ENCODE measurements at regions of chr5 and their contacts with region 1.

Region 1: GRCh38 chr5:5560016-5560415 is 137.5 kb downstream of the ICE1 start:
- DNase-seq: no peak
- ATAC-seq: no peak
- H3K4me3 ChIP-seq: no peak overlapping the region
- H3K27ac ChIP-seq: no peak overlapping the region
- H3K4me1 ChIP-seq: no peaks in the 10 kb centered on the region
- H3K27me3 ChIP-seq: peaks cover 73% of the 10 kb centered on the region
- CTCF ChIP-seq: no peak

Region 2: DNA sequence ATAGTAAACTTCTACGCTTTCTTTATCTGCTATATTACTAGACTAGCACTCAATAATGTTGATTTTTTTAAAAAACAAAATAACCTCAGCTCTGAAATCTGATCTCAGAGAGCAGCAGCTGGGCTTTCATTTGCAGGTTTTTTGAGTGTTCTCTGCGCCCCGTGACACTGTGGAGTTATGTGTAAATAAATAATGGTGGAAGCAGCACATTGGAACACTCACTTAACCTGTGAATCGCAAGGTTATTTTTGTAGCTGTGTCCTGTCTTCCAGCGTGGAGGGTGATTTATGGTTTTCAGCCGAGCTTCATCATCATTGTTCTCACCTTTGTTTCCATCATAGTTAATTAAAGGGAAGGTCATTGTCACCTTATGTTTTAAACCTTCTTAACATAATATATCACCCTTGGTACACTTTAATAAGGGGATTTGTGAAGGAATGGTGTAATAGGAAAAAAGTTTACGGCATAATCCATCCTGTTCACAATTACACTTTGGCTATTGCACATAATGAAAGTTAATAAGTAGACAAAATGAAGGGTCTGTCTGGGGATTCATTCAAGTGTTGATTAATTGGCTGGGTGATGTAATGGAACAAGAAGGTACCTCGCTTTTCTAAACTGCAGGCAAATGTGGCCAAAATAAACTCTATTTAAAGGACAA is 913.2 kb before region 1 on chr5:
- CTCF ChIA-PET with region 1: no interaction called
- POLR2A ChIA-PET with region 1: no interaction called
- intact Hi-C with region 1: no loop called
- DNase-seq: no peak
- ATAC-seq: no peak
- H3K4me3 ChIP-seq: no peak overlapping the region
- H3K27ac ChIP-seq: no peak overlapping the region
- H3K4me1 ChIP-seq: no peaks in the 10 kb centered on the region
- H3K27me3 ChIP-seq: no peaks in the 10 kb centered on the region
- CTCF ChIP-seq: no peak

Region 3: DNA sequence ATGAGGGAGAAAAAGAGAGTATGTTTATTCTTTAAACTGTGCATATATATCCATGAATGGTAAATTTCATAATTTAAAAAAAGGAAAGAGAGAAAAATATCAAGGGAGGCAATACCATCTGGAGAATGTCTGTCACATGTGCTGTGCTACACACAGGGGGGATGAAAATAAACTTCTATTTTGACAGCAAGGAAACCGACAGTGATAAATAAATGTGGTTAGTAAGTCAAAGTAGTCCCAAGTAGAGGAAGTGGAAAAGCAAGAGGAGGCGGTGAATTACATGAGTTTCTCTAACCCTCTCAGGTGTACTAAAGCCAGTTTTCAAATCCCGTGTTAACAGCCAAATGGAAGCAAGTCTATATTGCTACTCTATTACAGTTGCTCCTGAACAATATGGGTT is 54.2 kb before region 1 on chr5:
- CTCF ChIA-PET with region 1: no interaction called
- POLR2A ChIA-PET with region 1: no interaction called
- intact Hi-C with region 1: no loop called
- DNase-seq: no peak
- ATAC-seq: no peak
- H3K4me3 ChIP-seq: no peak overlapping the region
- H3K27ac ChIP-seq: no peak overlapping the region
- H3K4me1 ChIP-seq: no peaks in the 10 kb centered on the region
- H3K27me3 ChIP-seq: peaks cover 67% of the 10 kb centered on the region
- CTCF ChIP-seq: no peak

Region 4: GRCh38 chr5:5533927-5534326 is 26.1 kb before region 1 on chr5:
- CTCF ChIA-PET with region 1: no interaction called
- POLR2A ChIA-PET with region 1: interaction called, 26 read pairs
- intact Hi-C with region 1: no loop called
- DNase-seq: no peak
- ATAC-seq: no peak
- H3K4me3 ChIP-seq: no peak overlapping the region
- H3K27ac ChIP-seq: no peak overlapping the region
- H3K4me1 ChIP-seq: no peaks in the 10 kb centered on the region
- H3K27me3 ChIP-seq: peaks cover 81% of the 10 kb centered on the region
- CTCF ChIP-seq: no peak

Measured in PC-3 (cell line).